HEK293T (cell line): ENCODE measurements at regions of chr22 and their contacts with region 1.

Region 1: GRCh38 chr22:46542011-46542985 is 4.9 kb upstream of the CELSR1 start:
- DNase-seq: peak; percentile 87

Region 2: DNA sequence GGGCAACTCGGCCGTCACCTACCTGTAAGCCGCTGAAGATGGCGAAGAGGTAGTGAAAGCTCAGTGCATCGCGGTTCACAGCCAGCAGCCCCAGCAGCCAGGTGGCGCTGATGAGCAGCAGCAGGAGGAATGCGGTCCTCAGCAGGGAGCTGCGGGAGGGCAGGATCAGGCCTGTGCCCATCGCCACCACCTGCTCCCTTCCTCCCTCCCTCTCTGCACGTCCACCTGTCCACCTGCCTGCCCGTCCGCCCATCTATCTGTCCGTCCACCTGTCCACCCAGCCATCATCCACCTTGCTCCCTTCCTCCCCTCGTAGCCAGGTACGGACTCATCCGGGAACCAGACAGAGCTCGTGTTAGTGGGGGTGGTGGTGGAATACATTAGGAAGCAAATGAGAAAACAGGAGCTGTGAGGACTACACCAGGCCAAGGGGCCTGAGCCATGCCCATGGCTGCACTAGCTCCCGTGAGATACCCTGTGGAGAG is 174.5 kb before region 1 on chr22:
- CTCF ChIA-PET with region 1: interaction called, 48 read pairs
- POLR2A ChIA-PET with region 1: no interaction called
- DNase-seq: peak; percentile 87

Region 3: DNA sequence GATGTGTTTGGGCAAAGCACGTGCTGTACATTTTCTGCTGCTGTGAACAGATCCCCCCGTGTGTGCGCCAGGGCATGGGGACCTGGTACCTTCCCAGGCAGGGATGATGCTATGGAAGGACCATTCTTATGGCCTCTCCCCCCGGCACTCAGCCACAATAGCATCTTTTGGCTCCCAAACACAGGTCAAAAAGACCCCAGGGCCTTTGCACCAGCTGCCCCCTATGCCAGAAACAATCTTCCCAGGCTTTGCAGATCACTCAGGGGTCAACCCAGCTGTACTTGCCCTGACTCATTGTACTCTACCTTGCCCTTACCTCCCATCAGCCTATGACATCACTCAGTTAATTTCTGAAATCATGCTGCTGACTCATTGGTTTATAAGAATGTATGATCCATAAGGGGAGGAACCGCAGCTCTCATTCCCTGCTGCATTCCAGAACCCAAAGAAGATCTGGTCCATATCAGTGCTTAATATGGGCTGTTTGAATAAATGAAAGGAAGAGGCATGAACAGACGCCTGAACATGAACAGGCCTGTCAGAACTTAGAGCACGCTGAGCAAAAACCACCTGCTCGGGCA is 105.6 kb before region 1 on chr22:
- CTCF ChIA-PET with region 1: no interaction called
- POLR2A ChIA-PET with region 1: no interaction called
- DNase-seq: no peak

Region 4: DNA sequence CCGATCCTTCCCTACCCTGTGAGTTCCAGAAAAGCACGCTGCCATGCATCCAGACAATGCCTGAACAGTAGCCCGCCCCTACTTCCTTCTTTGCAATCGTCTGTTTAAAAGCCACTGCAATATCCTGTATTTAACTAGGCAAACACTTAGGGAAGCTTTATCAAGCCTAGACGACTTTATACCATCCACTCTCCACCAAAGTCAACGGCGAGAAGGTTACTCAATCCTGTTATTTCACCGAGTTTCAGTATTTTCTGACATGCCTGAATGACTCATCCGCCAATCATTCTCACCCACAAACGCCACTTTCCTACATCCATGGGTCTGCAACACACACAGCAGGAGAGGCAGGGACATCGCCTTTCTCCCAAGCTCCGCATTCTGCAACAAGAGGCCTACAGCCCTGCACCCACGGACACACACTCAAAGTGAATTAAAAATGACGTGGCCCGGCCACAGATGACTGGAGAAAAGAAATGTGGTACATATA is 14.1 kb before region 1 on chr22:
- CTCF ChIA-PET with region 1: no interaction called
- POLR2A ChIA-PET with region 1: no interaction called
- DNase-seq: no peak